Activated CD8-positive, alpha-beta T cell treated with anti-CD3 and anti-CD28 coated beads for 36 hours (primary cell): ENCODE measurements at regions of chr11 and their contacts with region 1.

Region 1: DNA sequence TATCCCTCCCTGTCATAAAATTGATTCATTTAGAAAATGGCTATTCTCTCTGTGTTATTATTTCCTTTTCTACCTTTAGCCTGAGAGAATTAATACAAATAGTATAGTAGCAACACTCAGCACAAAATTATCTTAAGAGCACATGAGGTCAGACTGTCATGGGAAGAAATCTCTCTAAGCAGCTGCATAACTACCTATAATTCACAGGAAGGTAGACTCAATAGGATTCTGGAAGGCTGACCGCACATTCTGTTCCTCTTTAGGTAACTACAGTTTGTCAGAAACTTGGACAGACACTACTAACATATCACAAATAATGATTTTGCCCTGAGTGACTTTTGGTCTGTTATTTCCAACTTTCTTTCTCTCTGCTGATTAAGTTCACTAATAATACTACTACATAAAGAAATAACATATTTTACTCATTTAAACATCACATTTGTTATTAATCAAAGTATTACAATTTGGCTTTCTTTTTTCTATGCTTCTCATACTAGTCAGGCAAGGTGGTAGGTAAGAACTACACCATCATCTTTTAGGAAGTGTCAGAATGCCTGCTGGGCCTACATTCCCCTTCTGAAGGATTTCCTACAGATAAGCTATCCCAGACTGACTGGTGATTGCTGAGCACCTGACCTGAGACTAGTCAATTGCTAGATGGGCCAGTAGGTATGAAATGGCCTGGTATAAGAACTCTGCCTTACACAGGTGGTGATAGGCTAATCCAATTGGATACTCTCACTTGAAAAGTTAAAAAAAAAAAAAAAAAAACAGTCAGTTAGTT is 325.1 kb downstream of the DLG2 start:
- DNase-seq: no peak
- ATAC-seq: no peak
- H3K4me3 Mint-ChIP-seq: no peak overlapping the region
- H3K27ac Mint-ChIP-seq: no peak overlapping the region
- H3K4me1 Mint-ChIP-seq: no peaks in the 10 kb centered on the region
- H3K27me3 Mint-ChIP-seq: no peaks in the 10 kb centered on the region
- CTCF ChIP-seq: no peak

Region 2: GRCh38 chr11:84580428-84580827 is 721.7 kb before region 1 on chr11:
- CTCF ChIA-PET with region 1: no interaction called
- POLR2A ChIA-PET with region 1: no interaction called
- intact Hi-C with region 1: no loop called
- DNase-seq: no peak
- ATAC-seq: no peak
- H3K4me3 Mint-ChIP-seq: no peak overlapping the region
- H3K27ac Mint-ChIP-seq: no peak overlapping the region
- H3K4me1 Mint-ChIP-seq: no peaks in the 10 kb centered on the region
- H3K27me3 Mint-ChIP-seq: no peaks in the 10 kb centered on the region
- CTCF ChIP-seq: no peak

Region 3: DNA sequence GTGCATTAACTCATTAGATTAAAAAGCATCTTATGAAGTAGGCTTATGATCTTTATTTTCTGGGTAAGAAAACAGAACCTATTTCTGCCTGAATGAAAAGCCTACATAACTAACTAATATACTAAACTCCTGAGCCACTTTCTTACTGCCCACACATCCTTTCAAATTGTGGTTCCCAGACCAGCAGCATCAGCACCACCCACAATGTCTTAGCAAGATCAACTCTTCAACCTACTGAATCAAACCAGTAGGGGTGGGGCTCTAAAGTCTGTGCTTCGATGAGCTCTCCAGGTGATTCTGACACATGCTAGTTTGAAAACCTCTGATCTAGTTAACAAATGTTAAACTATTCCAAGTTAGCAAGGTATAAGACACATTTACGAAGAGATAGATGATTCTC is 137.3 kb before region 1 on chr11:
- CTCF ChIA-PET with region 1: no interaction called
- POLR2A ChIA-PET with region 1: no interaction called
- intact Hi-C with region 1: loop called (anchors 5 kb)
- DNase-seq: no peak
- ATAC-seq: no peak
- H3K4me3 Mint-ChIP-seq: no peak overlapping the region
- H3K27ac Mint-ChIP-seq: no peak overlapping the region
- H3K4me1 Mint-ChIP-seq: no peaks in the 10 kb centered on the region
- H3K27me3 Mint-ChIP-seq: no peaks in the 10 kb centered on the region
- CTCF ChIP-seq: no peak

Region 4: DNA sequence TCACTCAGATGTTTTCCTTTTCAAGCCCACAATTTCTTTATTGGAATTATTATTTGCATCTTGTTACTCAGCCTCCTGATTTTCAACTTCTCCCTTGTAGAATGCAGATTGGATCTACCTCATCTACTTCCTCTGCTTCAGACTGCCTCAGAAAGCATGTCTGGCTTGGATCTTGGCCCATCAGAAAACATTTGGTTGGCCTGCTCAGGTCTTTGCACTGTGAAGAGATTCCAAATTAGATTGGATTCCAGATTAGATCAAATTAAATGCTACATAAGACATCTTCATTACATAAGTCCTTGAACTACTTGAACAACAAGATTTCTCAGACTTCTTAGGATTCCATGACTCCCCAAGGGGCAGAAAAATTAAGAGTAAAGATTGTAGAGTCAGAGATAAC is 33.0 kb before region 1 on chr11:
- CTCF ChIA-PET with region 1: no interaction called
- POLR2A ChIA-PET with region 1: no interaction called
- intact Hi-C with region 1: no loop called
- DNase-seq: no peak
- ATAC-seq: no peak
- H3K4me3 Mint-ChIP-seq: no peak overlapping the region
- H3K27ac Mint-ChIP-seq: no peak overlapping the region
- H3K4me1 Mint-ChIP-seq: no peaks in the 10 kb centered on the region
- H3K27me3 Mint-ChIP-seq: no peaks in the 10 kb centered on the region
- CTCF ChIP-seq: no peak

Region 5: GRCh38 chr11:85316967-85317366 is 14.9 kb after region 1 on chr11:
- CTCF ChIA-PET with region 1: no interaction called
- POLR2A ChIA-PET with region 1: no interaction called
- intact Hi-C with region 1: no loop called
- DNase-seq: no peak
- ATAC-seq: no peak
- H3K4me3 Mint-ChIP-seq: no peak overlapping the region
- H3K27ac Mint-ChIP-seq: no peak overlapping the region
- H3K4me1 Mint-ChIP-seq: no peaks in the 10 kb centered on the region
- H3K27me3 Mint-ChIP-seq: no peaks in the 10 kb centered on the region
- CTCF ChIP-seq: no peak